Activated CD8-positive, alpha-beta T cell treated with anti-CD3 and anti-CD28 coated beads, Interleukin-2, amount 10 ng/mL, durations not matched to agents 7 days and 5 days (primary cell): ENCODE measurements at regions of chr2 and their contacts with region 1.

Region 1: DNA sequence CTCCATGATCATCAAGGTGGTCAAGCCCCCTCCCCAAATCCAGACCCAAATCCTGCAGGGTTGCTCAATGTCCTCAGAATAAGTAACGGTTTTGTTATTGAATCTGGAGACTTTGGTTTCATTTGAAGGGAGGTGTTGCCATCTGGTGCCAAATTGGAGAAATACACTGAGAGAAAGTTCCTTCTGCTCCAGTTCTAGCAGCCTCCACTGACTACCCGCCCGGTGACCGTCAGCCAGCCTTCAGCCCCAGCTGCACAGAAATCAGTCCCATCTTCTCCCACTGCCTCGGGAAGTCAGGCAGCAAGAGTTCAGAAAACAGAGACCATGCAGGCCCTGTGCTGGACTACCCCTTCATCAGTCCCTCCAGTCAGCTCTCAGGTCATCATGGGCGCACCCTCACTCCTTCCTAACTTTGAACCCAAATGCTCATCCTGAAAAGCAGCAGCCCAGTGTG is 38.7 kb downstream of the PKDCC start:
- DNase-seq: peak; percentile 63
- ATAC-seq: peak; percentile 57
- H3K4me3 Mint-ChIP-seq: no peak overlapping the region
- H3K27ac Mint-ChIP-seq: no peak overlapping the region
- H3K4me1 Mint-ChIP-seq: peaks cover 8% of the 10 kb centered on the region
- H3K27me3 Mint-ChIP-seq: peaks cover 16% of the 10 kb centered on the region

Region 2: GRCh38 chr2:41840702-41841551 is 245.6 kb before region 1 on chr2:
- CTCF ChIA-PET with region 1: interaction called, 39 read pairs
- POLR2A ChIA-PET with region 1: no interaction called
- DNase-seq: peak; percentile 99
- ATAC-seq: peak; percentile 100
- H3K4me3 Mint-ChIP-seq: peak overlapping the region; percentile 84
- H3K27ac Mint-ChIP-seq: peak overlapping the region; percentile 84
- H3K4me1 Mint-ChIP-seq: peaks cover 12% of the 10 kb centered on the region
- H3K27me3 Mint-ChIP-seq: peaks cover 13% of the 10 kb centered on the region

Region 3: GRCh38 chr2:41869542-41870264 is 216.8 kb before region 1 on chr2:
- CTCF ChIA-PET with region 1: interaction called, 261 read pairs
- POLR2A ChIA-PET with region 1: no interaction called
- DNase-seq: peak; percentile 77
- ATAC-seq: peak; percentile 84
- H3K4me3 Mint-ChIP-seq: no peak overlapping the region
- H3K27ac Mint-ChIP-seq: no peak overlapping the region
- H3K4me1 Mint-ChIP-seq: peaks cover 6% of the 10 kb centered on the region
- H3K27me3 Mint-ChIP-seq: peaks cover 22% of the 10 kb centered on the region

Region 4: DNA sequence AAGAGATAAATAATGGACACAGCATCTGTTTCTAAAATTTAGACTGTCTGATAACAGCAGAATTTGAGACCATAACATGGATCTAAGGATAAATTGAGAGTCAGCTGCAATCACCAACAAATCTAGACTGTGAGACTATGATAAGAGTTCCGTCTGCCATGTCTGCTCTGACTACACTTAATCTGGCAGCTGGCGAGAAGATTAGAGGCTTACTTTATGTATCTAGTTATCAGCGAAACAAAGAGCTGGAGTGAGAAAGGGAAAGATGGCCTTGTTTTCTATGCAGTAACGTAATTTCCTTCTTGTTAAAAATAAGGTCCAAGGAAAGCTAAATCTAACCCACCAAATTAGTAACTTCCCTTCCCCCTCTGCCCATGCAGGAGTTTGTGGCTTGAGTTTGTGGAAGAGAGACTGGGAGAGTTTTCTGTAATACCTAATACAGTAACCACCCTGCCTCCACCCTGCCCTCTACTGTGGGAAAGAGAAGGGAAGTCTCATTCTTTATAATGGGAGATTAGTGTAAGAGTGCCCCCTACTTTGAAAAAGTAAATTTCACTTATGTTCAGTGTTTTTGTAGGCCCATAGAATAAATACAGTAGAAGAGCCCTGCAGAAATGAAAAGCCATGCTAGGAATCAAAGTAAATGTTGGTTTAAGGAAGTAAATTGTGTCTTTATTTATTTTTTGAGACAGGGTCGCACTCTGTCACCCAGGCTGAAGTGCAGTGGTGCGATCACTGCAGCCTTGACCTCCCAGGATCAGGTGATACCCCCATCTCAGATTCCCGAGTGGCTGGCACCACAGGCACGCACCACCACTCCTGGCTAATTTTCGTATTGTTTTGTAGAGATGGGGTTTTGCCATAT is 110.1 kb after region 1 on chr2:
- CTCF ChIA-PET with region 1: interaction called, 54 read pairs
- POLR2A ChIA-PET with region 1: no interaction called
- DNase-seq: peak; percentile 60
- ATAC-seq: peak; percentile 86
- H3K4me3 Mint-ChIP-seq: no peak overlapping the region
- H3K27ac Mint-ChIP-seq: peak overlapping the region; percentile 35
- H3K4me1 Mint-ChIP-seq: peaks cover 52% of the 10 kb centered on the region
- H3K27me3 Mint-ChIP-seq: no peaks in the 10 kb centered on the region

Region 5: GRCh38 chr2:42328148-42328833 is 241.8 kb after region 1 on chr2:
- CTCF ChIA-PET with region 1: interaction called, 11 read pairs
- POLR2A ChIA-PET with region 1: no interaction called
- DNase-seq: no peak
- ATAC-seq: peak; percentile 55
- H3K4me3 Mint-ChIP-seq: no peak overlapping the region
- H3K27ac Mint-ChIP-seq: no peak overlapping the region
- H3K4me1 Mint-ChIP-seq: no peaks in the 10 kb centered on the region
- H3K27me3 Mint-ChIP-seq: no peaks in the 10 kb centered on the region